Naive thymus-derived CD4-positive, alpha-beta T cell (primary cell): ENCODE measurements at regions of chr6 and their contacts with region 1.

Region 1: GRCh38 chr6:14276667-14277404 is 159.3 kb downstream of the CD83 start:
- DNase-seq: peak in 7 of 9 donors; percentile 73 to 90 (median 85)
- ATAC-seq: peak; percentile 99
- H3K4me3 ChIP-seq: peak overlapping the region; percentile 34
- H3K4me3 Mint-ChIP-seq: peak overlapping the region; percentile 72 to 96 (median 80)
- H3K27ac ChIP-seq: peak overlapping the region; percentile 47
- H3K27ac Mint-ChIP-seq: peak overlapping the region; percentile 82 to 97 (median 91)
- H3K4me1 ChIP-seq: peaks cover 20 to 39% of the 10 kb centered on the region in 2 donors
- H3K4me1 Mint-ChIP-seq: peaks cover 33 to 64% (median 55%) of the 10 kb centered on the region in 7 donors
- H3K27me3 ChIP-seq: no peaks in the 10 kb centered on the region
- H3K27me3 Mint-ChIP-seq: no peaks in the 10 kb centered on the region

Region 2: GRCh38 chr6:14228571-14228970 is 48.3 kb before region 1 on chr6:
- CTCF ChIA-PET with region 1: no interaction called
- POLR2A ChIA-PET with region 1: no interaction called
- intact Hi-C with region 1: loop called in 1 of 2 experiments (anchors 5 kb)
- DNase-seq: peak in 6 of 9 donors; percentile 28 to 58 (median 48)
- ATAC-seq: peak; percentile 52
- H3K4me3 ChIP-seq: no peak overlapping the region
- H3K4me3 Mint-ChIP-seq: peak overlapping the region in 3 of 10 donors; percentile 38 to 44 (median 39)
- H3K27ac ChIP-seq: no peak overlapping the region
- H3K27ac Mint-ChIP-seq: peak overlapping the region in 3 of 9 donors; percentile 11 to 70 (median 25)
- H3K4me1 ChIP-seq: no peaks in the 10 kb centered on the region
- H3K4me1 Mint-ChIP-seq: peaks cover 0 to 51% (median 35%) of the 10 kb centered on the region in 7 donors
- H3K27me3 ChIP-seq: no peaks in the 10 kb centered on the region
- H3K27me3 Mint-ChIP-seq: no peaks in the 10 kb centered on the region

Region 3: DNA sequence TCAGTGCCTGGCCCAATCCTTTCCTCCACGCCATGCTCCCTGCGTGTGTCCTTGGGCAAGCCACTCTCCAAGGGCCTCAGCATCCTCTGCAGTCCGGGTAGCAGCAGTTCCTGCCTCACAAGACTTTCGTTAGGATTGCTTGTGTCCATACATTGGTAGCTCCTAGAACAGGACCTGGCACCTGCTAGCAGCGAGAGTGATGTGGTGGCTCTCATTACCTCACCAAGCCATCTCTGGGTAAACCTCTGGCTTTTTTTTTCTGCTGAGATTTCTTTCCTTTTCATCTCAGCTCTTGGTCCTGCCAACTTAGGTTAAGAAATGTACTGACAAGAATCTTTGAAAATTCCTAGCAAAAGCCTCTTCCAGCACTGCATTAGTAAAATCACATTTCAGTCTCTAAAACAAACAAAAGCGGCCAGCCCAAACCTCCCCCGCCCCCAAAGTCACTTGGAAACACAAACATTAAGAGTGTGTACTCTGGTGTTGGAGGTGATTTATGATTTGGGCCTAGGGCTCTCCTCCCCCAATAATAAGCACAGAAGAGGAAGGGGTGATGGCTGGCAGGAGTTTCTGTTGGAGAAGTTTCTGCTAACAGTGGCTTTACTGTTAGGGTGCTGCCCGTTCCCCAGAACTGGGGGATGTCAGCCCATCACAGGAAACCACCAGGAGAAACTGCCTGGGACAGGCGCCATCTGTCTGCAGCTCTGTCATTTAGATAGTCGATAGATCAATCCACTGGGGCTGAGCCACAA is 40.0 kb after region 1 on chr6:
- CTCF ChIA-PET with region 1: no interaction called
- POLR2A ChIA-PET with region 1: no interaction called
- intact Hi-C with region 1: loop called in 1 of 2 experiments (anchors 1 kb)
- DNase-seq: peak in 3 of 9 donors; percentile 3 to 11 (median 9)
- ATAC-seq: no peak
- H3K4me3 ChIP-seq: no peak overlapping the region
- H3K4me3 Mint-ChIP-seq: no peak overlapping the region
- H3K27ac ChIP-seq: no peak overlapping the region
- H3K27ac Mint-ChIP-seq: peak overlapping the region in 3 of 9 donors; percentile 25 to 50 (median 35)
- H3K4me1 ChIP-seq: peaks cover 0 to 3% of the 10 kb centered on the region in 2 donors
- H3K4me1 Mint-ChIP-seq: peaks cover 4 to 22% (median 20%) of the 10 kb centered on the region in 7 donors
- H3K27me3 ChIP-seq: no peaks in the 10 kb centered on the region
- H3K27me3 Mint-ChIP-seq: peaks cover 0 to 4% (median 0%) of the 10 kb centered on the region in 5 donors

Region 4: DNA sequence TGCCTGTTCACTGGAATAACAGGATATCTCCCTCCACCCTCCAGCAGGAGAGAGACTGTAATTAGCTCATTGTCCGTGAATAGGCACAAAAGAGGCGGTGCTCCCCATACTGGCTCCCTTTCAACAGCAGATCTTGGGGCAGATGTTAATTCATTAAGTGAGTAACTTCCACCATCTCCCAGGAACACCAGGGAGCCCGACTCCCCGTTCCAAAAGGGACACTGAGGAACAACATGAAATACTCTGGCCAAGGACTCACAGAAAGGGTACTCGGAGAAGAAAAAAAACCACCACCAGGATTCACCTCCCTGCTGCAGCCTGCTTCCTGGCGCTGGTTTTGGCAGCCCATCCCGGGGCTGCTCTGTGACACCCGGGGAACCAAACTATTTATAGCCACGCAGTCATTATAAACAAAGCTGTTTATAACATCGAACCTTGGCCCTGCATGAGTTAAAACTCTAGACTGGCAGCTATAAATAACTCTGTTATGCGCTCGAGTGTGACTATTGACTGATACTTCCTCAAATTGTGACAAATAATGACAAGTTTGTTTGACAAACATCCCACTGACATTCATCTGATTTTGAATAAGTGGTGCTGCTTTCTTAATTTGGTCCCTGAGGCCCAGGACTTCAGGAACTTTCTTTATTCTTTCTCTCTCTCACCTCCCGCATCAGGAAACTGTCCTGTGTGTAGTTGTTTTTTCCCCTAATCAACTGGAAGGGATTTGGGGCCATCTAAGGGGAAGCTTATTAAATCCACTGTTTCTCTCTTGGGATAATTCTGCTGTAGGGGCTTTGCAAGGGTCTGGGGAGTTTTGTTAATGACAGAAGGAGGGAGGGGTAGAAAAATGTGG is 362.3 kb after region 1 on chr6:
- CTCF ChIA-PET with region 1: no interaction called
- POLR2A ChIA-PET with region 1: interaction called, 3 read pairs
- intact Hi-C with region 1: loop called in 1 of 2 experiments (anchors 10 kb)
- DNase-seq: no peak
- ATAC-seq: peak; percentile 54
- H3K4me3 ChIP-seq: no peak overlapping the region
- H3K4me3 Mint-ChIP-seq: peak overlapping the region in 1 of 10 donors; percentile 14
- H3K27ac ChIP-seq: no peak overlapping the region
- H3K27ac Mint-ChIP-seq: peak overlapping the region in 2 of 9 donors; percentile 25 to 46
- H3K4me1 ChIP-seq: peaks cover 27 to 29% of the 10 kb centered on the region in 2 donors
- H3K4me1 Mint-ChIP-seq: peaks cover 41 to 63% (median 52%) of the 10 kb centered on the region in 7 donors
- H3K27me3 ChIP-seq: no peaks in the 10 kb centered on the region
- H3K27me3 Mint-ChIP-seq: peaks cover 0 to 25% (median 4%) of the 10 kb centered on the region in 5 donors

Region 5: DNA sequence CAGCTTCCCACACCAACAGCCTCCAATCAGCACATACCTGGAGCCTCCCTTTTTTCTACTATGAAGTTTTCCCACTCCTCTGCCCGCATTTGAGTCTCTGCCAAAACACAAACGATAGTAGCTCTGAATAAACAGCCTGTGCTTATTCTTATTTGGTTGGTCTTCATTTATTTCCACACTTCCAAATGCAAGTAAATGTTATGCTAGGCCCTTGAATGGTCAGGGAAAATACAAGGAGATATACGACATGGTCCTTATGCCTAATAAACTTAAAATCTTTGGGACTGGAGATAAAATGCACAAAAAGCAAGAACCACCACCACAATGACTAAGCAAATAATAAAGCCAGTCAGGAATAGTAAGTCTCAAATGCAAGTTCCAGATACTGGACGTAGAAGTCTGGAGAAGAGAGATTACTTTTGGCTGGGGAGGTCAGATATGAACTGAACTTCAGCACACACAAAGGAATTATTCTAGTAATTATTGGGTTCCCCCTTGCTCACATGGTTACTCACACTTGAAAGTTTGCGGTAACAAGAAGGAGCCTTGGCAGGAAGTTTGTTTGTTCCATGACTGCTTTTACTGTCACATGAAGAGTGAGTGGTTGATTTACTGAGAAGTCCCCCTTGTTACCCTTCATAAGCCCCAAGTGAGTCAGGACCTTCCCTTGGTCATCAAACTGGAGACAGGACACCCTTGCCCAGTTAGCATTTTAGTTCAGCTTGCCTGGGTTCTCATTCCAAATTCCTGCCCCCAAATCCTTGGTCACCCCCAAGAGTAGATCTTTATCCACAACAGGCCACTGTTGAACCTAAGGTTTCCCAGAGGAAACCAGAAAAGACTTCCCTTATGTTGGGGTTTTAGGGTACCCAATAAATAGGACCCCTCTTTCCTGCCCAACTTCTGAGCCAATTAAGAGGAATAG is 457.8 kb after region 1 on chr6:
- CTCF ChIA-PET with region 1: no interaction called
- POLR2A ChIA-PET with region 1: no interaction called
- intact Hi-C with region 1: loop called (anchors 5 kb)
- DNase-seq: peak in 7 of 9 donors; percentile 20 to 54 (median 44)
- ATAC-seq: peak; percentile 78
- H3K4me3 ChIP-seq: no peak overlapping the region
- H3K4me3 Mint-ChIP-seq: peak overlapping the region in 9 of 10 donors; percentile 23 to 72 (median 52)
- H3K27ac ChIP-seq: no peak overlapping the region
- H3K27ac Mint-ChIP-seq: peak overlapping the region in 8 of 9 donors; percentile 12 to 86 (median 54)
- H3K4me1 ChIP-seq: peaks cover 31 to 34% of the 10 kb centered on the region in 2 donors
- H3K4me1 Mint-ChIP-seq: peaks cover 30 to 84% (median 71%) of the 10 kb centered on the region in 7 donors
- H3K27me3 ChIP-seq: no peaks in the 10 kb centered on the region
- H3K27me3 Mint-ChIP-seq: no peaks in the 10 kb centered on the region